Left cardiac atrium (tissue), 4 donors: ENCODE measurements at regions of chr3 and their contacts with region 1.

Region 1: DNA sequence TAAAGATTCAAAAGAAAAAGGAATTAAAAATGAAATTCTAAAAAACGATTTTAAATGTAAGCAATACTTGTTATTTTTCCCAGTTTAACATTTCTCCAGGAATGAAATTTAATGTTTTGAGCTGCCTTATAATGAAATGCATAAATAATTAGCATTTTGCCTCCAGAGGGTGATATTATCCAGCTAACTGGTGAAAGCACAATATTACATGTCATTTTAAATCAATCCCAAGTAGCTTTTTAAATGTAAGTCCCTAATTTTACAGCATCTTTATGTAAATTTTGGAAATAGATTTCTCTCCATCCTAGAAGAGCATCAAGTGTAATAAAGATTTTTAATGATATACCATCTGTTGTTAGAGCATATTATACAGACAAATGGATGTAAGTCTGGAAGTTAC is 139.1 kb upstream of the P2RY1 start:
- DNase-seq: no peak
- ATAC-seq: no peak

Region 2: DNA sequence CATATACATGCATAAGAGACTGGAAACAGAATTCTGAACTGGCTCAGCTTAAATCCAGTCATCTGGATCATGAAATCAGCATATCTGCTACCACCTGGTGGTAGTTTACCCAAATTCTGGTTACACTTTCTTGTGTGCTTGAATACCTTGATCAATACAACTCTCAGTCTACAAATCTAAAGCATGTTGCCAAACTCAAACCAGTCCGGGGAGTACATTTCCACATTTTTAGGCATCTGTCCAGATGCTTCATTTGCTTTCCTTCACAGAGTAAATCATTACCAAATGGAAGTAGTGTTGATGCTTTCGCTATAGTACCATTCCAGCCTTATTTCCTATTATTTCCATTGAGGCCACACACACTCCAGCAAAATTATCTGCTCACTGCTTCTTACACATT is 265.5 kb after region 1 on chr3:
- intact Hi-C with region 1: loop called in 1 of 2 experiments (anchors 10 kb)
- DNase-seq: no peak
- ATAC-seq: no peak